ENCODE measurements at regions of chr9 and their contacts with region 1.

Region 1: GRCh38 chr9:37650873-37651768 is at the start of gene FRMPD1:
- DNase-seq: no peak
- ATAC-seq: peak; percentile 96
- H3K4me3 ChIP-seq: peak within 1 kb of the TSS; percentile 51 to 57
- H3K27ac ChIP-seq: no peak within 1 kb of the TSS
- H3K4me1 ChIP-seq: peaks cover 8% of the 10 kb centered on the region; the same call in 1 of the 2 replicates
- H3K27me3 ChIP-seq: peaks cover 49% of the 10 kb centered on the region
- CTCF ChIP-seq: no peak
- total RNA-seq, gene FRMPD1: 0.21 TPM

Region 2: GRCh38 chr9:35798658-35799374 is 1852.3 kb before region 1 on chr9:
- CTCF ChIA-PET with region 1: no interaction called
- POLR2A ChIA-PET with region 1: no interaction called
- in situ Hi-C with region 1: no loop called
- intact Hi-C with region 1: no loop called
- DNase-seq: peak; percentile 61
- ATAC-seq: no peak
- H3K4me3 ChIP-seq: no peak overlapping the region
- H3K27ac ChIP-seq: no peak overlapping the region
- H3K4me1 ChIP-seq: 0 out of 2 replicates have a peak, but pooled peaks cover 3% of the 10 kb centered on the region
- H3K27me3 ChIP-seq: no peaks in the 10 kb centered on the region
- CTCF ChIP-seq: no peak

Region 3: GRCh38 chr9:37602817-37603216 is 48.3 kb before region 1 on chr9:
- CTCF ChIA-PET with region 1: no interaction called
- POLR2A ChIA-PET with region 1: interaction called, 17 read pairs
- in situ Hi-C with region 1: no loop called
- intact Hi-C with region 1: no loop called
- DNase-seq: no peak
- ATAC-seq: no peak
- H3K4me3 ChIP-seq: no peak overlapping the region
- H3K27ac ChIP-seq: no peak overlapping the region
- H3K4me1 ChIP-seq: 0 out of 2 replicates have a peak, but pooled peaks cover 2% of the 10 kb centered on the region
- H3K27me3 ChIP-seq: peaks cover 18% of the 10 kb centered on the region; the same call in 1 of the 2 replicates
- CTCF ChIP-seq: no peak

Region 4: GRCh38 chr9:37760416-37761161 is 109.5 kb after region 1 on chr9:
- CTCF ChIA-PET with region 1: no interaction called
- POLR2A ChIA-PET with region 1: no interaction called
- in situ Hi-C with region 1: no loop called
- intact Hi-C with region 1: no loop called
- DNase-seq: no peak
- ATAC-seq: no peak
- H3K4me3 ChIP-seq: no peak overlapping the region
- H3K27ac ChIP-seq: no peak overlapping the region
- H3K4me1 ChIP-seq: no peaks in the 10 kb centered on the region
- H3K27me3 ChIP-seq: no peaks in the 10 kb centered on the region
- CTCF ChIP-seq: no peak